MCF 10A (cell line): ENCODE measurements at regions of chr4 and their contacts with region 1.

Region 1: GRCh38 chr4:168153596-168154440 is 61.5 kb downstream of the ANXA10 start:
- DNase-seq: peak; percentile 71
- H3K4me3 Mint-ChIP-seq: no peak overlapping the region
- H3K27ac Mint-ChIP-seq: no peak overlapping the region
- H3K4me1 Mint-ChIP-seq: no peaks in the 10 kb centered on the region
- H3K27me3 Mint-ChIP-seq: no peaks in the 10 kb centered on the region
- CTCF ChIP-seq: peak; percentile 65

Region 2: GRCh38 chr4:167021545-167022155 is 1132.2 kb before region 1 on chr4:
- CTCF ChIA-PET with region 1: interaction called, 10 read pairs
- POLR2A ChIA-PET with region 1: no interaction called
- intact Hi-C with region 1: loop called (anchors 5 kb)
- DNase-seq: peak; percentile 78
- H3K4me3 Mint-ChIP-seq: no peak overlapping the region
- H3K27ac Mint-ChIP-seq: no peak overlapping the region
- H3K4me1 Mint-ChIP-seq: peaks cover 5% of the 10 kb centered on the region
- H3K27me3 Mint-ChIP-seq: no peaks in the 10 kb centered on the region
- CTCF ChIP-seq: peak; percentile 82

Region 3: DNA sequence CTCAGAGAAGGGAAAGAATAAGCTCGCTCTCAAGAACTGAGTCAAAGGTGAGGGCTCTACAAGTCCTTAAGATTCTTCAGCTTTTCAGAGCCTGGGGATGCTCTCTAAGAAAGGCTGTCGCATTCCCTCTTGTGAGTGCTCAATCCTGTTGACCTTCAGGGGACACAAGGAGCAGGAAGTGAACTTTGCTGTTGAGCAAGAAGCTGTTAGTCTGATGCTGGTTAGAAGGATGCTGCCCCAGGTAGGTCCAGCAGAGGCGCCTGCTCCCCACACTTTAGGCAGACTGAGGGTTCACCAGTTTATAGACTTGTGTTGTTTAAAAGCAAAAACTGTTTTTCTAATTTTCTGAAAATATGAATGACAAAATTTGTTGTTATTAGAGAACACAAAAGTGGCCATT is 794.1 kb before region 1 on chr4:
- CTCF ChIA-PET with region 1: no interaction called
- POLR2A ChIA-PET with region 1: no interaction called
- intact Hi-C with region 1: no loop called
- DNase-seq: no peak
- H3K4me3 Mint-ChIP-seq: no peak overlapping the region
- H3K27ac Mint-ChIP-seq: no peak overlapping the region
- H3K4me1 Mint-ChIP-seq: no peaks in the 10 kb centered on the region
- H3K27me3 Mint-ChIP-seq: no peaks in the 10 kb centered on the region
- CTCF ChIP-seq: no peak

Region 4: GRCh38 chr4:167622481-167623246 is 531.2 kb before region 1 on chr4:
- CTCF ChIA-PET with region 1: interaction called, 10 read pairs
- POLR2A ChIA-PET with region 1: no interaction called
- intact Hi-C with region 1: loop called (anchors 10 kb)
- DNase-seq: peak; percentile 66
- H3K4me3 Mint-ChIP-seq: no peak overlapping the region
- H3K27ac Mint-ChIP-seq: no peak overlapping the region
- H3K4me1 Mint-ChIP-seq: no peaks in the 10 kb centered on the region
- H3K27me3 Mint-ChIP-seq: no peaks in the 10 kb centered on the region
- CTCF ChIP-seq: peak; percentile 74

Region 5: DNA sequence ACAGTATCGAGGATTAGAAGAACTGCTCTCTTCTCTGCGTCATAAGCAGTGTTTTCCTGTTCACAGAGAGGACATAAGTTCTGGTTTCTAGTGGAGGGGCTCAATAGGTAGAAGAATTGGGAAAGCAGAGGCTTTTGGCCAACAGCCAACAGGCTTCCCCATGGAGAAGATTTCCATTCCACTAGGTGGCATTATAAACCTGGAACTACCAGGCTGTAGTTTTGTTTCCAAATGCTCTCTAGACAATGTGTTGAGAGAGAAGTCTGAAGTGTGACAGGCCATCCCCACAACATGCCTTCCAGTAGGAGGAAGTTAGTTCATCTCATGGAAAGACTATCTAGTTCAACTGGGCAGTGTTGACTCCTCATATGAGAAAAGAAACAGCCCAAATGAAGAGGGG is 125.2 kb before region 1 on chr4:
- CTCF ChIA-PET with region 1: interaction called, 7 read pairs
- POLR2A ChIA-PET with region 1: no interaction called
- intact Hi-C with region 1: loop called (anchors 1 kb)
- DNase-seq: peak; percentile 71
- H3K4me3 Mint-ChIP-seq: no peak overlapping the region
- H3K27ac Mint-ChIP-seq: no peak overlapping the region
- H3K4me1 Mint-ChIP-seq: no peaks in the 10 kb centered on the region
- H3K27me3 Mint-ChIP-seq: no peaks in the 10 kb centered on the region
- CTCF ChIP-seq: peak; percentile 16

Region 6: GRCh38 chr4:168129046-168129772 is 24.6 kb before region 1 on chr4:
- CTCF ChIA-PET with region 1: interaction called, 23 read pairs
- POLR2A ChIA-PET with region 1: no interaction called
- intact Hi-C with region 1: no loop called
- DNase-seq: no peak
- H3K4me3 Mint-ChIP-seq: no peak overlapping the region
- H3K27ac Mint-ChIP-seq: no peak overlapping the region
- H3K4me1 Mint-ChIP-seq: peaks cover 9% of the 10 kb centered on the region
- H3K27me3 Mint-ChIP-seq: no peaks in the 10 kb centered on the region
- CTCF ChIP-seq: no peak